ENCODE measurements at regions of chr17 and their contacts with region 1.

Region 1: DNA sequence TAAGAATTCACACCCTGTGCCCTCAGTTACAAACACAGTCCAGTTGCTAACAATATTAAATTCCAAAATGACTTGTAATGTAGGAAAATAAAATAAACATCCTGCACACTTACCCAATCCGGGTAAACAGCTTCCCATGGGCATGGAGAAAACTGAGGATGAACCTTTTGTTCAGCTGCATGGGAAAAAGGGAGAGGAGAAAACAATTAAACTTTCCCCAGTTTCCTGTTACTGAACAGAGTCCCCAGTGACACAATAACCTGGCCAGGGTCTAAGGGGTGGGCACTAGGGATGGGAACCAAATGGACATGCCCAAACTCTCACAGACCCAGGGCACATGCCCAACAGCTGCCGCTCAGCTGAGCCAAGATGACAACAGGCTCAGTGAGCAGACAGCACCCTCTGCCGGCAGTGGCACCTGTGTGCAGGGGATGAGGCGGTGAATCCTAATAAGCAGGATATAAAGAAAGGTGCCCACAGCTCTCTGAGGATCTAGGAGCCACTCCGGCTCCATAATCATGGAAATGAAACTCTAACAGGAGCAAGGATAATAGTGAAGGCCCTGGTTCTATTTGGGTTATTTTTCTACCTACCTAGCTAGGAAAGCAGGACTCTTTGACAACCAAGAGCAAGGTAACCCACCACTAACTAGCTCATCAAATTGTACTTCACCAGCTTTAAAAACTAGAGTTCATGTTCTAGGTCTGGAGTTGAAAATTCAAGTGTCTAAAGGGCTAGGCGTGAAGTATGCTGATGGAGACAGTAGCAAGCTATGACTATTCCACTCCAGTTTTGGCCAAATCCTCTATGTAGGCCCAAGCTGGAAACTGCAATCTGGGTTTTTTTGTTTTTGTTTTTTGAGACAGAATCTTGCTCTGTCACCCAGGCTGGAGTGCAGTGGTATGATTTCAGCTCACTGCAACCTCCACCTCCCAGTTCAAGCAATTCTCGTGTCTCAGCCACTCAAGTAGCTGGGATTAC is 58.8 kb downstream of the SMG6 start:
- DNase-seq: peak; percentile 82
- H3K4me3 ChIP-seq: no peak overlapping the region
- H3K27me3 ChIP-seq: no peaks in the 10 kb centered on the region
- CTCF ChIP-seq: peak; percentile 97

Region 2: DNA sequence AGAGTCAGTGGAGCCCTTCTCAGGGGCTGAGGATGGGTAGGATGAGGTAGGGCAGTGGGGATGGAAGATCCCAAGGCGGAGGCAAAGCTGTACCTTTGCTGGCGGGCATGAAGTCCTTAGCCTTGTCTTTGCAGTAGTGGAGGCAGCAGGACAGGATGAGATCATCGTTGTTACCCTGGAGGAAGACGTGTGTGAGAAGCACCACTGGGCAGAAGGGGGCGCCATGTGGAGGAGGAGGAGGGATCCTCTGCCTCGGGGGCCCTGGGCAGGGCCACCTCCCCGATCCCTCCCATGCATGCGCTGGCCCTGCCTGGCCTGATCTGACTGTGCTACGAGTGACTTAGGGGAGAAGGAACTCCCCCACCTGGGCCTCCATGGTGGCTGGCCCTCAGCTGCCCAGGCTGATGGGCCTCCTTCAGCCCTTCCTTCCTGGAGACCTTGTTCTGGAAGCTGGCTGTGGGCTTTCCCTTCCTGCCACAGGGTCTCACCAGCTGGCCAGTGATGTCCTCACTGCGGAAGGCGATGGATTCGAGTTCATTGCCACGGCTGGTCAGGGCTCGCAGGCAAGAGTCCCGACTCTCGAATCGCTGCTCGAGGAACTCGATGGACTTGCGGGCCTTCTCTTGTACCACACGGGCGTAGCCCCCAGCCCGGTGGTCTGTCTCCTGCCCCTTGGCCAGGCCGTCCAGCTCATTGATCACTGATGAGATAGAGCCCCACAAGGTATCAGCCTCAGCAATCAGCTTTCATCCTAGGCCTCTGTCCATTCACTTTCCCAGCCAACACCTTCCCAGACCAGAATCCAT is 179.7 kb before region 1 on chr17:
- CTCF ChIA-PET with region 1: interaction called, 310 read pairs
- POLR2A ChIA-PET with region 1: no interaction called
- DNase-seq: no peak
- H3K4me3 ChIP-seq: no peak overlapping the region
- H3K27me3 ChIP-seq: no peaks in the 10 kb centered on the region
- CTCF ChIP-seq: peak; percentile 65

Region 3: DNA sequence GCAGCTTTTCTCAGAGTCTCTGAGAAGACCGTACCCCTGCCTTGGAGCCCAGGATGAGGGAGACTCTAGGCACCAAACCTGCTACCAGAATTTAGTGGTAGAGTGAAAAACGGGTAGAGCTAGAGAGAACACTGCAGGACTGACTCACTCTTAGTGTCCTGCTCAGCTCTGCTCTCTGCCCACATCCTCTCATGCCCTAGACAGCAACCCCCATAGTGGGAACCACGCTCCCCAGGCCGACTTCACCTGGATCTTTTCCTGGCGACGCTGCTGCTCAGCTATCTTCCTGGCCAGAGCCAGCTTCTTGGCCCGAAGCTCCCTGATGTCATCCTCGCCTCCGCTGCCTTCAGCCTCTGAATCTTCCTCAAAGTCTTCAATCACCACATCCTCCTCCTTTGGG is 163.3 kb before region 1 on chr17:
- CTCF ChIA-PET with region 1: interaction called, 20 read pairs
- POLR2A ChIA-PET with region 1: interaction called, 4 read pairs
- DNase-seq: no peak
- H3K4me3 ChIP-seq: no peak overlapping the region
- H3K27me3 ChIP-seq: no peaks in the 10 kb centered on the region
- CTCF ChIP-seq: no peak

Region 4: GRCh38 chr17:2122641-2123302 is 122.1 kb before region 1 on chr17:
- CTCF ChIA-PET with region 1: interaction called, 11 read pairs
- POLR2A ChIA-PET with region 1: no interaction called
- DNase-seq: no peak
- H3K4me3 ChIP-seq: no peak overlapping the region
- H3K27me3 ChIP-seq: no peaks in the 10 kb centered on the region
- CTCF ChIP-seq: 0 out of 2 replicates have a peak, but pooled peaks have one; percentile 6

Region 5: DNA sequence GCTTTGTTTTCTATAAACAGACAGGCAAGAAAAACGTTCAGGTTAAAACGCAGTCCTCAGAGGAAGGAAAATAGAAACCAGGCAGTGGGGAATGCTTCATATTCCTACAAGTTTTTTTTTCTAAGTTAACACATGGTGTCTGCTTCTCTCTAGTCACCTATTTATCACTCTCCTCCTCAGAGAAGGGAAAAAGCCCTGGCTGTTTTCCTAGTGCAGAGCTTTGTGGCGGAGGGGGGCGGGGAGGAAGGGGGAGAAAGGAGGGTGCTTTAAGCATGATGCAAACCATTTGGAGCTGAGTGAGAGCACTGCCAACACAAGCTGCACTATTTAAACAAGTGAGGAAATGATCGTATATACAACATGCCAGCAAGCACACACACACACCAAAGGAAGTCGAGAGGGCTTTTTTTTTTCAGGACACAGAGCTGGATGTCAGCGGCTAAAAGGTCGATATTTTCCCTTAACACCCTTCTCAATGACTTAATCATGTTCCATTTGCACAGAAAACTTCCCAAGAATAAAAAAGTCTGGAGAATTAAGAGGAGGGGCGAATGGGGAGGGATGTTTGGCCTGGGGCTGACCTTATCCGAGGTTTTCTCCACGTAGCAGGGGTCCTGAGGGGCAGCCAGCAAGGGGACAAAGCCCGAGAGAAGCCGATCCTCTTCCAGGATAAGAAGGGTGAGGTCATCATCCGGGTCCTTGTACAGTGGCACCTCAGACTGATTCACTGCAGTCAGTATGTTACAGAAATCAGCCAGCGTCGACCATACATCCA is 72.6 kb before region 1 on chr17:
- CTCF ChIA-PET with region 1: interaction called, 12 read pairs
- POLR2A ChIA-PET with region 1: interaction called, 3 read pairs
- DNase-seq: peak; percentile 87
- H3K4me3 ChIP-seq: no peak overlapping the region
- H3K27me3 ChIP-seq: no peaks in the 10 kb centered on the region
- CTCF ChIP-seq: no peak

Region 6: DNA sequence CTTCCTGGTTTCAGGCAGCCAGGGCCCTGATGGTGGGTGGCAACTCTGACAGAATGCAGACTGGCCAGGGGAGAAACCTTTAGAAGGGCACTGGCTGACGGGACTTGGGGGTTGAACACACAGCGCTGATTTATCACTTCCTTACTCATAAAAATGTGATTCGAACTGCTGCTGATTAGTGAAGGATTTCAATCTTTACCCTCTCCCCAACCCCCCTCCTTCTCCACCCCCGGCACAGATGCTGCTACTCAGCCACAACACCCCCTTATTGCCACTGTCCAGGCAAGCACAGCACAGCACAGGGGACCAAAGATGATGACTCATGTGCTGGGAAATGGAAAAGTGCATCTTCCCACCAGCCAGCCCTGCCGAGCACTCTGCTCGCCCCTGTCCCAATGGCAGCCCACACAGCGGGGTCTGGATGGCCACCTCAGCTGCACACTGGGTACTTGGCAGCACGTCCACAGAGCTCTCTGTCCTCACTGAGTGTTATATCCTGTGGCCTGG is 11.3 kb before region 1 on chr17:
- CTCF ChIA-PET with region 1: interaction called, 25 read pairs
- POLR2A ChIA-PET with region 1: no interaction called
- DNase-seq: peak; percentile 66
- H3K4me3 ChIP-seq: no peak overlapping the region
- H3K27me3 ChIP-seq: no peaks in the 10 kb centered on the region
- CTCF ChIP-seq: no peak

Region 7: DNA sequence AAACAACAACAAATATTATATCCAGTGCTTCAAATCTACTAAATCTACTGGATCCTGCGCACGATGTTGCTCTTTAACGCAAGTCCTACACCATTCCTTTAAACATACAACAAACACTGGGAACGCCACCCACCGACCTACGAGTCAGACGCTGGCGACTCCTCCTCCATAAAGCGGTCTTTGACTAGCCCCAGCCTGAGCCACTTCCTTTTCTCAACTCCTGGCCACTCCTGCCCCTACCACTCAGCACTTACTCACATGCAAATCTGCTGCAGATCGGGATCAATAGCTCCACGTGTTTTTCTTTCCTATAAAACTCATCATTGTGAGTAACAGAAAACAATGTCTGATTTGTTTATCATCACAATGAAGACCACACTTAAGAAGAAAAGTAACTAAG is 188.9 kb after region 1 on chr17:
- CTCF ChIA-PET with region 1: no interaction called
- POLR2A ChIA-PET with region 1: no interaction called
- DNase-seq: no peak
- H3K4me3 ChIP-seq: no peak overlapping the region
- H3K27me3 ChIP-seq: no peaks in the 10 kb centered on the region
- CTCF ChIP-seq: no peak

Measured in BJ (cell line).